ENCODE measurements at regions of chr12 and their contacts with region 1.

Region 1: DNA sequence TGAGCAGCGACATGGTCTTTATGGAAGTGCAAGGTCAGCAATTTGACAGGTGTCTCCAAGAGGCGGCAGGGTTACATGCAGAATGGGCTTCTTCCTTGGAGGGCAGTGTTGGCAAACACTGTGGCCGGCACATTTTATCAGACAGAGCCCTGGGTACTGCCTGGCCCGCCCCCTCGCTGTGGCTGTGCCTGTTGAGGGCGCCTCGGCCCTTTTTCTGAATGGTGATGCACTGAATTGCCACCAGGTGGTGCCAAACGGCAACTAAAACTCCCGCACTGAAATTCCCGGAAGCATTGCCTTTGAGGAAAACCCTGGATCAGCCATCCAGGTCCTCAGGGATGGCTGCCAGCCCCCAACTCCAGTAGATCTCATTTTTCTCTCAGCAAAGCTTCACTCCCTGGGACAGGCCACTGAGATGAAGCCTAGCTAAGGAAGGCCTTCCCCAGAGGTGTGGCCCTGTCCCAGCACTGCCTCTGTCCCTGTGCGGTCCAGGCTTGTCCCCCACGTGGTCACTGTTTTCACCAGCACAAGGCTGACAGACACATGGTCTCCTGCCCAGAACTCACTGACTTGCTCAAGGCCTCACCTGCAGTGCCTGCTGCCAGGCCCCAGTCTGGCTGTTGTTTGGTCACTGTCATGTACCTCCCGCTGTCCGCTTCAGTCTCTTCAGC is 73.6 kb downstream of the TESC start:
- DNase-seq: peak; percentile 55
- H3K4me3 ChIP-seq: no peak overlapping the region
- H3K27ac ChIP-seq: no peak overlapping the region
- H3K4me1 ChIP-seq: peaks cover 0 to 5% (median 2%) of the 10 kb centered on the region in 4 donors
- H3K27me3 ChIP-seq: no peaks in the 10 kb centered on the region
- CTCF ChIP-seq: peak; percentile 81 to 88 (median 87)
- EP300 ChIP-seq: no peak
- POLR2A ChIP-seq: no peak

Region 2: DNA sequence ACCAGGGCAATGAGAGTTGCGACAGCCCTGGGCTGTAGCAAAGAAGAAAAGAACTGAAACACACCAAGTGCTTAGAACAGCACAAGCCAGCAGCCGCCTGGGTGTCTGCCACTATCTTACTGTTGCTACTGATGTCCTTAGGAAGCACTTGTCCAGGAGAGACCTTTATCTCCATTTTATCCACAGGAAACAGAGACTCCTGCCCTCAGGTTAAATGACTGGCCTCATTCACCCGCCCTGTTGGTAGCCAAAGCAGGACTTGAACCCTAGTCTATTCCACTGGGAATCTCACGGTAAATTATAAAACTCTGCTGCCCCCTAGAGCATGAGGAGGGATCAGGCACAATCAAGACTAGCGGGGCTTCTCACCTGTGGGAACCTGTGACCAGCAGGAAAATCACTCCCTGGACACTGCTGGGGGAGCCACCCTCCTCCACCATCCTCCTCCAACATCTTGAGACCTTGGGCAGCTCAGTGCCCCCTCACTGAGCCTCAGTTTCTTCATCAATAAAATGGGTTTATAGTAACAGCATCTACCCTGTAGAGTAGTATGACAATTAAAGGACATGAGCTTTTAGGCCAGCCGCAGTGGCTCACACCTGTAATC is 94.1 kb after region 1 on chr12:
- in situ Hi-C with region 1: loop called in 3 of 4 experiments (anchors 5 to 10 kb)
- intact Hi-C with region 1: loop called (anchors 10 kb)
- DNase-seq: no peak
- H3K4me3 ChIP-seq: no peak overlapping the region
- H3K27ac ChIP-seq: no peak overlapping the region
- H3K4me1 ChIP-seq: no peaks in the 10 kb centered on the region
- H3K27me3 ChIP-seq: no peaks in the 10 kb centered on the region
- CTCF ChIP-seq: peak; percentile 59 to 67 (median 65)
- EP300 ChIP-seq: no peak
- POLR2A ChIP-seq: no peak

Region 3: GRCh38 chr12:117155278-117156060 is 129.9 kb after region 1 on chr12:
- in situ Hi-C with region 1: no loop called
- intact Hi-C with region 1: loop called (anchors 10 kb)
- DNase-seq: peak; percentile 52
- H3K4me3 ChIP-seq: no peak overlapping the region
- H3K27ac ChIP-seq: no peak overlapping the region
- H3K4me1 ChIP-seq: no peaks in the 10 kb centered on the region
- H3K27me3 ChIP-seq: no peaks in the 10 kb centered on the region
- CTCF ChIP-seq: peak; percentile 59 to 74 (median 66)
- EP300 ChIP-seq: no peak
- POLR2A ChIP-seq: no peak

Region 4: DNA sequence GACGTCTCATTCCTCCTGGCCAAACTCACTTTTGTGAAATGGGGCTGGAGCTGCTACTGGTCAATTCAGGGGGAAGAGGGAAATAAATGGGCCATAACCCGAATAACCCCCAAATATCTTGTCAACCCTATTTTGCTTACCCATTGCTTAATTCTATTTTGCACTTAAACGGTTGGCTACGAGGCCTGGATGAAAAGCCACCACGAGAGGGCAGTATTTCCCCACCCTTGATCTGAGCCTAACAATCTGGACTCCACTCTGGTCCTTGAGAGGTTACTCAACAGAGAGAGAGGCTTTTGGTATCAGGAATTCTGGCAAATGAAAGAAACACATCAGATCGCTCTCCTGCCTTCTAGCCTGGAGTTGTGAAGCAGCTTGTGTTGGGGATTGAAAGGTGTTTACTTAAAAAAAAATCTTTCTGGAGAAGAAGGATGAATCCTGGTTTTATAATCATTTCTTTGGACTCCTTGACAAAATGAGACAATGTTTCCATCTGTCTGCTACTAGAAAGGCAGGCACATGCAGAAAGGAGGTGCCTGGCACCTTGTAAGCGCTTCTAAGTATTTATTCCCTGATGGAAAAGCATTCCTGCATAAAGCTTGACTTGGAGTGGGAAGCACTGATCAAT is 187.1 kb after region 1 on chr12:
- in situ Hi-C with region 1: no loop called
- intact Hi-C with region 1: no loop called
- DNase-seq: peak; percentile 69
- H3K4me3 ChIP-seq: no peak overlapping the region
- H3K27ac ChIP-seq: no peak overlapping the region
- H3K4me1 ChIP-seq: no peaks in the 10 kb centered on the region
- H3K27me3 ChIP-seq: peaks cover 3% of the 10 kb centered on the region
- CTCF ChIP-seq: peak; percentile 71 to 90 (median 80)
- EP300 ChIP-seq: no peak
- POLR2A ChIP-seq: no peak

Region 5: DNA sequence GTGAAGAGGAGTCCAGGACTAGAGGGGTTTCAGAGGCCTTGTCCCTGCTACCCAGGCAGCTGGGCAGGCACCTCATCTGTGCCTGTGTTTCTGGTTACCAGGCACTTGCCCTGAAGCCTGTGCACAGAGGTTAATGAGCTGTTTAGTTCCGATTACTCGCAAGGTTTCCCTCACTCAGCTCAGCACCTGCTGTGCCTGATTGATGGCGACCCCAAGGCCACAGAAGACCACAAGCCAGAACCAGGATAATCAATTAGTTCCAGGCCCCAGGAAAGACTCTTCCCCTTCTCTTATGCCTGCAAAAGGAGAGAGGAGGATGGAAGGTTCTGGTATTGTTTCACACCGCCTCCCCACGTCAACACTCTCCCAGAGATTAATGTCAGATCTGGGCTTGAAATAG is 424.6 kb after region 1 on chr12:
- in situ Hi-C with region 1: no loop called
- intact Hi-C with region 1: no loop called
- DNase-seq: no peak
- H3K4me3 ChIP-seq: no peak overlapping the region
- H3K27ac ChIP-seq: no peak overlapping the region
- H3K4me1 ChIP-seq: no peaks in the 10 kb centered on the region
- H3K27me3 ChIP-seq: no peaks in the 10 kb centered on the region
- CTCF ChIP-seq: no peak
- EP300 ChIP-seq: no peak
- POLR2A ChIP-seq: no peak